Transverse colon (tissue), 4 donors: ENCODE measurements at regions of chr2 and their contacts with region 1.

Region 1: GRCh38 chr2:101205521-101205998 is 47.1 kb upstream of the CNOT11 start:
- DNase-seq: peak; percentile 50
- H3K4me3 ChIP-seq: peak overlapping the region in 1 of 4 donors; percentile 27
- H3K27ac ChIP-seq: peak overlapping the region in 1 of 4 donors; percentile 30
- H3K4me1 ChIP-seq: peaks cover 0 to 4% (median 0%) of the 10 kb centered on the region in 4 donors
- H3K27me3 ChIP-seq: no peaks in the 10 kb centered on the region
- CTCF ChIP-seq: peak; percentile 47 to 58 (median 51)
- EP300 ChIP-seq: no peak
- POLR2A ChIP-seq: no peak

Region 2: DNA sequence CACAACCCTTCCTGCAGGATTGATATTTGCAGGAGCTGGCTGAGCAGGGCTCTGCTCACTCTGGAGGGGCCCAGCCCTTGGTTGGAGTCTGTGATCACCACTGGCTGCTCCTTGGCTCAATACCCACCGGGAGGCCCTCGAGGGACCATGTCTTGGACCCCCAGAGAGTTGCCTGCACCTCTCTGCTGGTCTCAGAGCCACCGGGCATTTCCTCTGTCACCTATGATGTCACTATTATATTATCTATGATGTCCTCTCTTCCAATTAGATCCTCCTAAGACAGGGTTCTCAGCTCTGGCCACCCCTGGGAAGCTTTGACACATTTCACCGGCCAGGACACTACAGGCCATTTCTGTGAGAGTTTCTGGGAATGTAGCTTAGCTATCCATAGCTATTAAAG is 529.7 kb before region 1 on chr2:
- in situ Hi-C with region 1: no loop called
- intact Hi-C with region 1: no loop called
- DNase-seq: no peak
- H3K4me3 ChIP-seq: no peak overlapping the region
- H3K27ac ChIP-seq: no peak overlapping the region
- H3K4me1 ChIP-seq: no peaks in the 10 kb centered on the region
- H3K27me3 ChIP-seq: no peaks in the 10 kb centered on the region
- CTCF ChIP-seq: no peak
- EP300 ChIP-seq: no peak
- POLR2A ChIP-seq: no peak

Region 3: GRCh38 chr2:101001691-101002561 is 203.6 kb before region 1 on chr2 and contains the start of gene RPL31:
- in situ Hi-C with region 1: loop called in 2 of 4 experiments (anchors 25 kb)
- intact Hi-C with region 1: no loop called
- DNase-seq: peak; percentile 98
- H3K4me3 ChIP-seq: peak within 1 kb of the TSS; percentile 58 to 74 (median 64)
- H3K27ac ChIP-seq: peak within 1 kb of the TSS; percentile 87 to 89 (median 89)
- H3K4me1 ChIP-seq: peaks cover 9 to 34% (median 20%) of the 10 kb centered on the region in 4 donors
- H3K27me3 ChIP-seq: no peaks in the 10 kb centered on the region
- CTCF ChIP-seq: no peak
- EP300 ChIP-seq: no peak
- POLR2A ChIP-seq: peak; percentile 91
- total RNA-seq, gene RPL31: 258 to 1,056 (median 762) TPM

Region 4: DNA sequence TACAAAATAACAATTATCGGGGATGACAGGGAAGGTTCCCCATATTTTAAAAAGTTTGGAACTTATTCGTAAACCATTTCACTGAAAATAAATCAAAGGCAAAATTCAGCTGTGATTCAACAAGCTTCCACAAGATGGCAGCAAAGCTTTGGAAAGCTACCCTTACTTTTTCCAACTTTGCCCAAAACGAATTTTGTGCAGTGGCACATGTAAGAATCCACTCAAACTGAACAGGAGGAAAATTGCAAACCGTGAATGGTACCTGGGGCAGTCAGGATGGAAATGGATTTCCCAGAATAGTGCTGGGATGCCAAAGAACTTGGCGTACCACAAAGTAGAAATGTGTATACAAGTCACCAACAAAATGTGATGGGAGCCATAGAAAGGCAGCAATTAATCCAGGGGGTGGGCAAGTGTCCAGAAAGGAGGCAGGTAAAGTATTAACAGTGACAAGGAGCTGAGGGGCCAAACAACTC is 192.8 kb before region 1 on chr2:
- in situ Hi-C with region 1: loop called in 2 of 4 experiments (anchors 25 kb)
- intact Hi-C with region 1: loop called (anchors 2 kb)
- DNase-seq: peak; percentile 19
- H3K4me3 ChIP-seq: no peak overlapping the region
- H3K27ac ChIP-seq: no peak overlapping the region
- H3K4me1 ChIP-seq: peaks cover 0 to 10% (median 0%) of the 10 kb centered on the region in 4 donors
- H3K27me3 ChIP-seq: no peaks in the 10 kb centered on the region
- CTCF ChIP-seq: peak; percentile 80 to 89 (median 84)
- EP300 ChIP-seq: no peak
- POLR2A ChIP-seq: no peak

Region 5: DNA sequence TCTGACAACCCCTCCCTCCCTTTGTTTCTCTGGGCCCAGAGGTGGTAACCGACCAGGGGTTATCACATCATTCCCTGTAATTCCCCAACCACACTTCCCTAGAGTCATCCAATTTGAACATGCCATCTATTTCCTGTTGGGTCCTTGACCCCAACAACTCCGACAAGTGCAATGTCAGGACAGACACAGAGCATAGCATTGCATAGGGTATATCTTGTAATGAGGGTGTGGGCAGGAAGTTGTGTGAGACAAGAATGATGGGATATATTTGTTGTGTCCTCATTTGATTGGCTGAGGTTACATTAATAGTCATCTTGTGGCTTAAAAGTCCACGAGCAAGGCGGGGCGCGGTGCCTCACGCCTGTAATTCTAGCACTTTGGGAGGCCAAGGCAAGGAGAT is 13.7 kb after region 1 on chr2:
- in situ Hi-C with region 1: no loop called
- intact Hi-C with region 1: loop called (anchors 1 kb)
- DNase-seq: no peak
- H3K4me3 ChIP-seq: no peak overlapping the region
- H3K27ac ChIP-seq: no peak overlapping the region
- H3K4me1 ChIP-seq: peaks cover 0 to 4% (median 0%) of the 10 kb centered on the region in 4 donors
- H3K27me3 ChIP-seq: no peaks in the 10 kb centered on the region
- CTCF ChIP-seq: no peak
- EP300 ChIP-seq: no peak
- POLR2A ChIP-seq: no peak